HepG2 (cell line): ENCODE measurements at regions of chr2 and their contacts with region 1.

Region 1: GRCh38 chr2:113138428-113139322 is 11.3 kb downstream of the IL1RN start:
- DNase-seq: peak; percentile 76
- ATAC-seq: peak; percentile 78
- H3K4me3 ChIP-seq: peak overlapping the region; percentile 11 to 52 (median 36); a peak in 4 of 6 replicates
- H3K27ac ChIP-seq: no peak overlapping the region
- H3K4me1 ChIP-seq: peaks cover 55% of the 10 kb centered on the region
- H3K27me3 ChIP-seq: peaks cover 0 to 11% of the 10 kb centered on the region in 2 experiments; a peak in 1 of 5 replicates
- CTCF ChIP-seq: peak; percentile 82
- EP300 ChIP-seq: no peak
- POLR2A ChIP-seq: no peak
- RAD21 ChIP-seq: peak; percentile 61

Region 2: DNA sequence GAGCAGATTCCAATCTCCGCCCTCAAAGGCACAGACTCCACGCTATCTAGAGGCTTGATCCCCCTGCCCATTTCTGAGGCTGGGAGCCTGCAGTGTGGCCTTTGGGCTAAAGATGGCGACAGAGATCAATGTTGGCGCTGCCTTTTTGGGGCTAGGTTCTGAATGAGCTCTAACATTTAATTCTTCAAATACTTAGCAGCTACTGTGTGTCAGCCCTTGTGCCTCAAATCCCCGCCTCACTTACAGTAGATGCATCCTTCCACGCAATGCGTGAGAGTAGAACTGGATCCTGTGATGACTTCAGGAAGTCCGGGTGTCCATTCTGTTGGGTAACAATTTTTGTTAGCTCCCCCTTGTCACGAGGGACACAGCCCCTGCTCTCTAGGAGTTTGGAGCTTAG is 58.5 kb before region 1 on chr2:
- CTCF ChIA-PET with region 1: interaction called, 35 read pairs
- POLR2A ChIA-PET with region 1: interaction called, 5 read pairs
- in situ Hi-C with region 1: loop called (anchors 5 kb)
- intact Hi-C with region 1: loop called (anchors 1 kb)
- DNase-seq: peak; percentile 40
- ATAC-seq: peak; percentile 93
- H3K4me3 ChIP-seq: no peak overlapping the region
- H3K27ac ChIP-seq: no peak overlapping the region
- H3K4me1 ChIP-seq: peaks cover 14% of the 10 kb centered on the region; the same call in 1 of the 2 replicates
- H3K27me3 ChIP-seq: peaks cover 0 to 10% of the 10 kb centered on the region in 2 experiments; a peak in 2 of 5 replicates
- CTCF ChIP-seq: peak; percentile 98
- EP300 ChIP-seq: no peak
- POLR2A ChIP-seq: no peak
- RAD21 ChIP-seq: peak; percentile 91

Region 3: DNA sequence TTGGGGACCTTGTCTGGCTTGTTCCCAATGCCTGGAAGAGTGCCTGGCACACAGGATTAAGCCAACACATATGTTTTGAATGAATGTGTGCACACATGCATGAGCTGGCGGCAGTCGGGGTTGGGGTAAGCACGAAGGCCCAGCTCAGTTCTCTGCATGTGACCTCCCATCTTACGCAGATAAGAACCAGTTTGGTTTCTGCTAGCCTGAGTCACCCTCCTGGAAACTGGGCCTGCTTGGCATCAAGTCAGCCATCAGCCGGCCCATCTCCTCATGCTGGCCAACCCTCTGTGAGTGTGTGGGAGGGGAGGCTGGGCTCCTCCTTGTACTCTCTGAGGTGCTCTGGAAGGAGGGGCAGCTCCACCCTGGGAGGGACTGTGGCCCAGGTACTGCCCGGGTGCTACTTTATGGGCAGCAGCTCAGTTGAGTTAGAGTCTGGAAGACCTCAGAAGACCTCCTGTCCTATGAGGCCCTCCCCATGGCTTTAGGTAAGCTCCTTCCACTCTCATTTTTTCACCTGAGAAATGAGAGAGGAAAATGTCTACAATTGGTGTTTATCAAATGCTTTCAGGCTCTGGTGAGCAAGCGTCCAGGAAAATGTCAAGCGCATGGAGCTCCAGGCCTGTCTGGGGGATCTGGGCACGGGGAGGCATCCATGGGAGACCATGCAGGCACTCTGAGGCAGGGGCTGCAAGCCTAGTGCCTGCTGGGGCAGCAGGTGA is 21.0 kb before region 1 on chr2:
- CTCF ChIA-PET with region 1: no interaction called
- POLR2A ChIA-PET with region 1: no interaction called
- in situ Hi-C with region 1: no loop called
- intact Hi-C with region 1: no loop called
- DNase-seq: no peak
- ATAC-seq: no peak
- H3K4me3 ChIP-seq: no peak overlapping the region
- H3K27ac ChIP-seq: no peak overlapping the region
- H3K4me1 ChIP-seq: peaks cover 48% of the 10 kb centered on the region
- H3K27me3 ChIP-seq: peaks cover under 1 to 41% of the 10 kb centered on the region in 2 experiments; a peak in 4 of 5 replicates
- CTCF ChIP-seq: no peak
- EP300 ChIP-seq: no peak
- POLR2A ChIP-seq: no peak
- RAD21 ChIP-seq: no peak

Region 4: DNA sequence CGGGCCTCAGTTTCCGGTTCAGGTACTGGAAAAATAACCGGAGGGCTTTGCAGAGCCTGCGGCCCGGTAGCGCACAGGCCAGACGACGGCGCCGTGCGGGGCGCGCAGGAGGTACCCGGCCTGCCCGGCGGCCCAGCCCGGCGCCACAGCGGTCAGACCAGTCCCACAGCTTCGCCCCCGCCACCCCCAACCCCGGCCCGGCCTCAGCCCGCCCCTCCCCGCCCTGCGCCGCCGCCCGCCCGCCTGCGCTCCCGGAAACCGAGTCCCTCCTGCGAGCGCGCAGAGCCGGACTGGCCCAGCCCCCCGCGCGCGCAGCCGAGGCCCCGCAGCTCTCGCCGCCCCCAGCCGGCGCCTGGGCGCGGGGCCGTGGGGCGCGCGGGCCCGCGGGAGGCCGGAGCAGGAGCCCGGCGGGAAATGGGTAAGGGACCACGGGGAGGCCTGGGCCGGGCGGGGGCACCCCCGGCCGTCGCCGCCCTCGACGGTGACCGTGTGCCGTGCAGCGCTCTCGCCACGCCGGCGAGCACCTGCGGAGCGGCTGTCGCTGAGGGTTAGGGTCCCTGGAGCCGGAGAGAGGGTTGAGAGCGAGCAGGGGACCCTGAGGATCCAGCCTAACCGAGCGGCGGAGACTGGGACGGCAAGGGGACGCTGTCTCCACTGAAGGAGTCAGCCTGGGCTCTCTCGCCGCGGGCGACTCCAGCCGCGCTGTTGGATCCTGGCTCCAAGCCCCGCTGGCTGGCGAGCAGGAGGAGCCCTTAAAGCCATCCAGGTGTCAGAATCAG is 18.6 kb after region 1 on chr2:
- CTCF ChIA-PET with region 1: no interaction called
- POLR2A ChIA-PET with region 1: interaction called, 29 read pairs
- in situ Hi-C with region 1: no loop called
- intact Hi-C with region 1: loop called (anchors 2 kb)
- DNase-seq: no peak
- ATAC-seq: peak; percentile 81
- H3K4me3 ChIP-seq: peak overlapping the region; percentile 56 to 82 (median 69)
- H3K27ac ChIP-seq: peak overlapping the region; percentile 64
- H3K4me1 ChIP-seq: peaks cover 43% of the 10 kb centered on the region
- H3K27me3 ChIP-seq: no peaks in the 10 kb centered on the region; a peak in 1 of 5 replicates
- CTCF ChIP-seq: peak; percentile 12; the same call in 1 of the 2 replicates
- EP300 ChIP-seq: no peak
- POLR2A ChIP-seq: peak in 1 of 2 experiments; percentile 59; a peak in 1 of 4 replicates
- RAD21 ChIP-seq: no peak

Region 5: DNA sequence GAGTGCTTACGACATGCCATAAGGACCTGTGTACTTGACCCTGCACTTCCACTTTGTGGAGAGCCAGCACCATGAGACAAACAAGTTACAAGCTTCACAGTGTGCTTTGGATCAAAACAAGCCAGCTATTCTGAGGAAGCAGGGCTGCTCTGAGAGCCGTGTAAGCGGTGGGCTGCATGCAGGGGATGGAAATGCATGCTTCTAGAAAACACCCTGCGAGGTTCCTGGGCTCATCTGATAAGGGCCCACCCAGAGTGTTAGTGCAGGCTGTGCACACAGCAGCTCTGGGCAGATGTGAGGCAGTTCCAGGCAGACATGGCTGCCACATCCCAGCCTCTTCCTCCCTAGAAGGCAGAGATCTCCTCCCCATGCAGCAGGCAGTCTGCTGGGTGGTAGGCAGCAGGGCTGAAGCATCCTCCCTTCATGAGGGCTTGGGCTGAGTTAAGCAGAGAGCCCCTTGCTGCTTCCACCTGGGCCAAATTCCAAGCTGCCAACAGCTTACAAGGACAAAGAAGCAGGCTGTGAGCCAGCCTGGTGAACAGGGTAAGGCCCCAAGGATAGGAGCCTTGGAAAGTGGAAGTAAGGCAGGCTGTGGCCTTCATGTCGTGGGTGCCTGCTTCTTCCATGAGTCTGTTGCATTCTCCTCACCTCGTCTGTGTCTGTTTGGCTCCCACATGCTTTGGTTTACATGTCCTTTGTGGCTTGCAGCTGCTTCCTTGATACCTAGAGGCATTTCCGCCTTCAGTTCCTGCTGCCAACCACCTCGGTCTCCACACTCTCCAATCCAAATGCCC is 42.8 kb after region 1 on chr2:
- CTCF ChIA-PET with region 1: interaction called, 24 read pairs
- POLR2A ChIA-PET with region 1: interaction called, 12 read pairs
- in situ Hi-C with region 1: no loop called
- intact Hi-C with region 1: loop called (anchors 1 kb)
- DNase-seq: peak; percentile 50
- ATAC-seq: peak; percentile 51
- H3K4me3 ChIP-seq: peak overlapping the region in 1 of 3 experiments; percentile 30; a peak in 1 of 6 replicates
- H3K27ac ChIP-seq: no peak overlapping the region
- H3K4me1 ChIP-seq: peaks cover 51% of the 10 kb centered on the region
- H3K27me3 ChIP-seq: no peaks in the 10 kb centered on the region
- CTCF ChIP-seq: 0 out of 2 replicates have a peak, but pooled peaks have one; percentile 2
- EP300 ChIP-seq: 0 out of 4 replicates have a peak, but pooled peaks of 1 of the 2 experiments have one; percentile 19
- POLR2A ChIP-seq: peak in 1 of 2 experiments; percentile 31; a peak in 1 of 4 replicates
- RAD21 ChIP-seq: no peak

Region 6: GRCh38 chr2:113370478-113371091 is 231.9 kb after region 1 on chr2:
- CTCF ChIA-PET with region 1: interaction called, 6 read pairs
- POLR2A ChIA-PET with region 1: interaction called, 4 read pairs
- in situ Hi-C with region 1: loop called (anchors 5 kb)
- intact Hi-C with region 1: loop called (anchors 1 kb)
- DNase-seq: peak; percentile 80
- ATAC-seq: peak; percentile 99
- H3K4me3 ChIP-seq: no peak overlapping the region
- H3K27ac ChIP-seq: no peak overlapping the region
- H3K4me1 ChIP-seq: peaks cover 8% of the 10 kb centered on the region
- H3K27me3 ChIP-seq: no peaks in the 10 kb centered on the region
- CTCF ChIP-seq: peak; percentile 94
- EP300 ChIP-seq: no peak
- POLR2A ChIP-seq: no peak
- RAD21 ChIP-seq: peak; percentile 95